Tibial artery (tissue), 4 donors: ENCODE measurements at regions of chr12 and their contacts with region 1.

Region 1: GRCh38 chr12:14948672-14949071 is 10.3 kb upstream of the ERP27 start:
- DNase-seq: peak in 1 of 2 donors; percentile 36
- H3K4me3 ChIP-seq: peak overlapping the region; percentile 2 to 29
- H3K27ac ChIP-seq: peak overlapping the region; percentile 79 to 84
- H3K4me1 ChIP-seq: peaks cover 0 to 68% (median 30%) of the 10 kb centered on the region in 4 donors
- H3K27me3 ChIP-seq: no peaks in the 10 kb centered on the region
- CTCF ChIP-seq: no peak

Region 2: GRCh38 chr12:14892726-14893505 is 55.8 kb before region 1 on chr12:
- intact Hi-C with region 1: loop called (anchors 5 kb)
- DNase-seq: peak; percentile 83 to 88
- H3K4me3 ChIP-seq: peak overlapping the region in 1 of 2 donors; percentile 6
- H3K27ac ChIP-seq: peak overlapping the region; percentile 78
- H3K4me1 ChIP-seq: peaks cover 0 to 48% (median 27%) of the 10 kb centered on the region in 4 donors
- H3K27me3 ChIP-seq: no peaks in the 10 kb centered on the region
- CTCF ChIP-seq: peak in 1 of 2 experiments; percentile 26

Region 3: GRCh38 chr12:14959463-14959862 is 10.8 kb after region 1 on chr12:
- intact Hi-C with region 1: loop called (anchors 1 kb)
- DNase-seq: no peak
- H3K4me3 ChIP-seq: peak overlapping the region; percentile 44 to 48
- H3K27ac ChIP-seq: peak overlapping the region; percentile 60 to 63
- H3K4me1 ChIP-seq: peaks cover 0 to 39% (median 15%) of the 10 kb centered on the region in 4 donors
- H3K27me3 ChIP-seq: no peaks in the 10 kb centered on the region
- CTCF ChIP-seq: no peak

Region 4: DNA sequence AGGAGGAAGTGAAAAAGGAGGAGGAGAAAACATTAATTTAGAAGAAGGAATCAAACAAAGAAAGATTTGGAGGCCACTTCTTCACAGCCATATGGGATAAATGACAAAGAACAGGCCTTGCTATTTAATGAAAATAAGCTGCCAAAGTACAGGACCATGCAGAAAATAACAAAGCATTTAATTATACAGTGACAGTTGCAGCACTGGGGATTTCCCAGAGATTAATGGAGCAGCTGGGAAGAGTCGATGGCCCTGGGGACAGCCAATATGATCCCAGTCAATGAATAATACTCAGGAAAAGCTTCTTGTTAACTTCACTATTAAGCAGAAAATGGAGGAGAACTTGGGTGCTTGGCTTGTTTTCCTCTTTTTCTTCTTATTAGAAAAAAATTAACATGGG is 237.9 kb after region 1 on chr12:
- intact Hi-C with region 1: no loop called
- DNase-seq: no peak
- H3K4me3 ChIP-seq: no peak overlapping the region
- H3K27ac ChIP-seq: peak overlapping the region; percentile 8 to 15
- H3K4me1 ChIP-seq: peaks cover 0 to 53% (median 13%) of the 10 kb centered on the region in 4 donors
- H3K27me3 ChIP-seq: no peaks in the 10 kb centered on the region
- CTCF ChIP-seq: no peak